Activated naive CD4-positive, alpha-beta T cell treated with anti-CD3 and anti-CD28 coated beads for 36 hours (primary cell): ENCODE measurements at regions of chr15 and their contacts with region 1.

Region 1: GRCh38 chr15:60720493-60721256 is 241.7 kb upstream of the ICE2 start:
- DNase-seq: peak; percentile 90
- H3K4me3 Mint-ChIP-seq: peak overlapping the region; percentile 49
- H3K27ac Mint-ChIP-seq: peak overlapping the region; percentile 99
- H3K4me1 Mint-ChIP-seq: peaks cover 59% of the 10 kb centered on the region
- H3K27me3 Mint-ChIP-seq: no peaks in the 10 kb centered on the region

Region 2: GRCh38 chr15:60448668-60449360 is 271.9 kb before region 1 on chr15:
- CTCF ChIA-PET with region 1: no interaction called
- intact Hi-C with region 1: no loop called
- DNase-seq: no peak
- H3K4me3 Mint-ChIP-seq: no peak overlapping the region
- H3K27ac Mint-ChIP-seq: no peak overlapping the region
- H3K4me1 Mint-ChIP-seq: no peaks in the 10 kb centered on the region
- H3K27me3 Mint-ChIP-seq: no peaks in the 10 kb centered on the region

Region 3: DNA sequence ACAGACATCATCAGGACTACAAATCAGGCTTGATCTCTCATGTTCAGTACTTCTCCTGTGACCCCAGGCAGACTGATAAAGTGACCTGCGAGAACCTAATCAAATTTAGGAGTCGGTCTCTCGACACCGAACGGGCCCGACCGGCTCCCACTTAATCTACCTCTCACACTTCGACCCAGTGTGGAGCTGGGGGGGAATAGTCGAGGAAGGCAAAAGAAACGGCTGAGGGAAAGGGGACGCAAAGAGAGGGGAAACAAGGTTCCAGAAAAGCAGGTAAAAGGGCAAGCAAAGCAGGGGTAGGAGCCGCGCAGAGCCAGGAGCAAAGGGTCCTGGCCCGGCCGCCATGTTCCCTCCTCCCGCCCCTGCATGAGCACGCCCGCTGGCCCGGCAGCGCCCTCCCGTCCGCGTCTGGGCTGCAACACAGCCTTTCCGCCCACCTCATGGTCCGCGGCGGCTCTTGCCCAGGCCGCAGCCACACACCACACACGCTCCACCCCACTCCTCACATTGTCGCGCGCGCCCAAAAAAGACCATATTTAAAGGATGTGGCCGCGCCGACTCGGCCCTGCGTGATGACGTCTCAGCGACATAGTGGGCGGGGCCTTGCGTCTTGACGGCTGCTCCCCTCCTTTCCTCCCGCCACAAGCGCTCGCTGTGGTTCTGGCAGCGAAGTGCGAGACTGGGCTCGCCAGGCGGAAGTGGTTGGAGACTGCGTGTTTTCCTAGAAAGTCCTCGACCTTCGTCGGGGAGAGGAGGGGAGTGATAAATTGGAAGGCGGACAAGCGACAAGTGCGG is 241.9 kb before region 1 on chr15 and contains the start of gene ICE2:
- CTCF ChIA-PET with region 1: no interaction called
- intact Hi-C with region 1: loop called (anchors 1 kb)
- DNase-seq: peak; percentile 98
- H3K4me3 Mint-ChIP-seq: peak within 1 kb of the TSS; percentile 93
- H3K27ac Mint-ChIP-seq: peak within 1 kb of the TSS; percentile 94
- H3K4me1 Mint-ChIP-seq: peaks cover 44% of the 10 kb centered on the region
- H3K27me3 Mint-ChIP-seq: no peaks in the 10 kb centered on the region
- total RNA-seq, gene ICE2: 75.2 to 76.7 TPM

Region 4: DNA sequence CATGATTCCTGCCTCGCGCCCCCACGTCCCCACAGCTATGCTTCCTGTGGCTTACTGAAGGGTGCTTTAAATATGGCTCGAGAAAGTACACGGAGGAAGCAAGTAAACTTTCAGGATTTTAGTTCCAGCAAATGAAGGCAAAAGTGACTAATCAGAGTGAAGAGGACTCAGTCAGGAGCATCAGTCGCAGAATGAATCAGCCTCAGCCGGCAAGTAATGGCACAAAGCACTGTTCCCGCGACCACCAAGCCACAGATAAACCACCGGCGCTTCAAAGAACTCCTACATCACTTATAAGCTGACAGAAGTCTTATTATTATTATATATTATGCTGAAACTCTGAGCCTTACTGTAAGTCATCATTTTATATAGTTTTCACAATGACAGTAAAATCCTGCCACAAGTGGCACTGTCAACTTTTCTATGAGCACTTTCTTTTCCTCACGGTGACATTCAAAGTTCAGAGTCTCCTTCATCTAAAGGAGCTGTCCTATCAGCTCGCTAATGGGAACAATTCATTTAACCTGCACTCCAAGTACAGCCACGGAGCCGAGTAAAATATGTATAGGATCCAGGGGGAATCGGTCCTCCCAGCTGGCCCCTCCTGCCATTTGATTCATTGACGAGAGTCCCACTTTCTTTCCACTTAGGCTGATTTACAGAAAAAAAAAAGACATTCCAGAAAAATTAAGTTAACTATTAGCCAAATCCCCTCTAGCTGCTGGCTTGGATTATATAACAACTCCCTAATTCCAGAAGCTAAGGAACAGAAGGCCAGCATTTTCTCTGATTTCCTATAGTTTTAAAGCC is 24.8 kb before region 1 on chr15:
- CTCF ChIA-PET with region 1: interaction called, 7 read pairs
- intact Hi-C with region 1: loop called (anchors 1 kb)
- DNase-seq: peak; percentile 94
- H3K4me3 Mint-ChIP-seq: peak overlapping the region; percentile 20
- H3K27ac Mint-ChIP-seq: peak overlapping the region; percentile 88
- H3K4me1 Mint-ChIP-seq: peaks cover 80% of the 10 kb centered on the region
- H3K27me3 Mint-ChIP-seq: no peaks in the 10 kb centered on the region

Region 5: DNA sequence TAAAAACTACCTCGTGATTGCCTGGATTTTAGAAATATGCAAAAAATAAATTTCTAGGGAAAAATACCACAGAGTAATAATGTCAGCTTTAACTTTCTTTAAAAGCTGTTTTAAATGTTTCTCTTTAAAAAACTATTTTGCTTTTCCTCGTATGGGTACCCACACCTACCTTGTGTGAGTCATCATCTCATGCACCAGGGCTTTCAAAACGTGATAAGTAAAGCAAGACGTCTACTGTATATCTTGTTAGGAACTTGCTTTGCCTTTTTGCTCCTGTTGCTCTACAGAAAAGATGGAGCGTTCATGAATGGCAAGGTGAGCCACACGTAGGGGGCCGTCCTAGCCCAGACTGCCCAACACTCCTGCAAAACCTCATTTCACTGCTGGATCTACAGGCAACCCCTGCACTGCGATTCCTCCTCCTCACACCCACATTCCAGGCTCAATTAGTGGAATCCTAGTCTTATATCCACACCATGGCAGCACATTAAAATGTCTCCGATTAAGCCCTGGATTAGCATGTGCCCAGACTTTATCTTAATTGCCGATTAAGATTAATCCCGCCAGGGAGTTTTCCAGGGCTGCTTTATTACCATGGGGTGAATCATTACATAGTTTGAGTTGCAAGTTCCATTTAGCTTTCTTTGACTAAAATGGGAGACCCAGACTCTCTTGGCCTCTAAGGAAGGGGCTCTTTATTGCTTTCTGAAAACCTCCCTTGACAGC is 51.9 kb after region 1 on chr15:
- CTCF ChIA-PET with region 1: interaction called, 3 read pairs
- intact Hi-C with region 1: loop called (anchors 1 kb)
- DNase-seq: peak; percentile 32
- H3K4me3 Mint-ChIP-seq: no peak overlapping the region
- H3K27ac Mint-ChIP-seq: peak overlapping the region; percentile 95
- H3K4me1 Mint-ChIP-seq: peaks cover 67% of the 10 kb centered on the region
- H3K27me3 Mint-ChIP-seq: no peaks in the 10 kb centered on the region

Region 6: DNA sequence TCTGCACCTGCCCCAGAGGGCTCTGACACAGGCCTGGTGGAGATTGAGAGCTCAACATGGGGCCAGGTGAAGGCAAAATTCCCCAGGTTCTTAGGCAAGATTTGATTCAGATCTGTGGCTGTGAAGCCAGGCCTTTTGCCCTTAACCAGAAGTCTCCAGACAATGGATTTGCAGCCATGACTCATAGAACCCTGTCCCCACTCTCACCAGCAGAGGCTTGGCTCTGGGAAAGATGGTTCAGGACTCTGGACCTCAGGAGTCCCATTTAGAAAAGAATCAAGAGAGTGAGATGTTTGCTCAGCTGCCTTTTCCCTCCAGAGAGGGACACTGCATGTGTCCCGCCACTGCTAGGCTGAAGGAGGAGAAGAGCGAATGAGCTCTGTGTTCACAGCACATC is 119.6 kb after region 1 on chr15:
- CTCF ChIA-PET with region 1: no interaction called
- intact Hi-C with region 1: loop called (anchors 1 kb)
- DNase-seq: peak; percentile 53
- H3K4me3 Mint-ChIP-seq: peak overlapping the region; percentile 76
- H3K27ac Mint-ChIP-seq: peak overlapping the region; percentile 84
- H3K4me1 Mint-ChIP-seq: peaks cover 73% of the 10 kb centered on the region
- H3K27me3 Mint-ChIP-seq: no peaks in the 10 kb centered on the region

Region 7: GRCh38 chr15:60925516-60925915 is 204.8 kb after region 1 on chr15:
- CTCF ChIA-PET with region 1: no interaction called
- intact Hi-C with region 1: no loop called
- DNase-seq: no peak
- H3K4me3 Mint-ChIP-seq: no peak overlapping the region
- H3K27ac Mint-ChIP-seq: no peak overlapping the region
- H3K4me1 Mint-ChIP-seq: no peaks in the 10 kb centered on the region
- H3K27me3 Mint-ChIP-seq: peaks cover 19% of the 10 kb centered on the region